Dendritic cell treated with granulocyte-macrophage colony-stimulating factor and Interleukin-4, amounts not matched to agents 40 ng/mL and 50 ng/mL, for 4 days (primary cell): ENCODE measurements at regions of chr6 and their contacts with region 1.

Region 1: GRCh38 chr6:31769684-31770371 is 7.3 kb downstream of the VWA7 start:
- H3K4me3 Mint-ChIP-seq: no peak overlapping the region
- H3K27ac Mint-ChIP-seq: peak overlapping the region; percentile 33
- H3K4me1 Mint-ChIP-seq: peaks cover 44% of the 10 kb centered on the region
- H3K27me3 Mint-ChIP-seq: peaks cover 3% of the 10 kb centered on the region

Region 2: DNA sequence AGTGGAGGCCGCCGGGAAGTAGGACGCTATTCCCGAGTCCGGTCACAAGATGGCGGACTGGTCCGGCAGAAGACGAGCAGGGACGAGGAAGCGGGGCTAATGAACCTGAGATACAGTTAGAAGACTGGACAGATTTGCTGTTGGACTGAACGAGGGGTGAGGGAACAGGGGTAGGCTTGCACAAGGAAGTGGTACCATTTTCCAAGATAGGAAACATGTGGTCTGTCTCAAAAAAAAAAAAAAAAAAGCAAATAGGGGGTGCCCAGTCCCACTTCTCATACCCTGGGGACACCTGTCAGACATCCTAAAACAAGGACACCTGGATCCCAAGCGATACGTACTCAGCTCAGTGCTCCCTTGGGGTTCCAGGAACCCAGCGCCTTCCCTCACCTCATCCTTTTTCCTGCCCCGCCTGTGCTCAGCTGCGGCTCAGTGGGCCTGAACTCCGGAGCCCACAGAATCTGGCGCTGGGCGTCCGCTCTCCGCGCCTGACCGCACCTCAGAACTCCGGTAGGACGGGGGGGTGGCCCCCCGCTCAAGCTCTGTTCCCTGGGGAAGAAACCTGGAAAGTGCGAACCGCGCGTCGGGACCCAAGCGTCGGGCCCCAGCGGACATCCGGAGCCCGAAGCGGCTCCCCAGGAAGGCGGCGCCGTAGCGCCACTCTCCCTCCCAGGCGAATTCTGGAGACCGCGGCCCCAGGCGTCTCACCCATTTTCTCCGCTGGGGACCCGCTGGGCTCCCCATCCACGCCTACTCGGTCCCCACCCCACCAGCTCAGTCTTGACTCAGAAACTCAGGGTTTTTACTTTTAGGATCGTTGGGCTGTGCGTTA is 88.8 kb before region 1 on chr6 and contains the start of gene LY6G5C:
- intact Hi-C with region 1: loop called (anchors 2 kb)
- H3K4me3 Mint-ChIP-seq: peak within 1 kb of the TSS; percentile 74
- H3K27ac Mint-ChIP-seq: peak within 1 kb of the TSS; percentile 55
- H3K4me1 Mint-ChIP-seq: peaks cover 55% of the 10 kb centered on the region
- H3K27me3 Mint-ChIP-seq: peaks cover 9% of the 10 kb centered on the region

Region 3: DNA sequence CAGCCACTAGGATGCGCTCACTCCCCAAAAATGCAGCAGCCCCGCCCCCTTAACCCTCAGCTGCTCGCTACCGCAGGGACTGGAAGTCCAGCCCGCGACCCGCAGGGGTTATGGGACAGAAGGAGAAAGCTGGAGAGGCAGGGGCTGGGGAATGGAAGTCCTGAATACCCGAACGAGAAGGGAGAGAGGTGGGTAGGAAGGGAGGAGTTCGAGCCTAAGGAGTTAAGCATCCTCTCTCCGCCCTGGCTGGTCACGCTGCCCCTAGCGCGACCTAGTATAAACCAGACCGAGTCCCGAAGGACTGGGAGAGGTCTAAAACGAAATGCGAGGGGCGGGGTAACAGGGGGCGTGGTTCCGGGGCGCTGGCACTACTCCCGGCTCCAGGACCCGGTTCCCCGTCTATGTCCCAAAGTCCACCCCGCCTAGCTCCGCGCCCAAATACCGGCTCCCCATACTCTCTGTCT is 40.3 kb before region 1 on chr6:
- intact Hi-C with region 1: loop called (anchors 2 kb)
- H3K4me3 Mint-ChIP-seq: peak overlapping the region; percentile 99
- H3K27ac Mint-ChIP-seq: peak overlapping the region; percentile 99
- H3K4me1 Mint-ChIP-seq: peaks cover 91% of the 10 kb centered on the region
- H3K27me3 Mint-ChIP-seq: peaks cover 3% of the 10 kb centered on the region

Region 4: GRCh38 chr6:31739639-31740396 is 30.0 kb before region 1 on chr6 and contains the start of gene MSH5:
- intact Hi-C with region 1: loop called (anchors 2 kb)
- H3K4me3 Mint-ChIP-seq: peak within 1 kb of the TSS; percentile 87
- H3K27ac Mint-ChIP-seq: peak within 1 kb of the TSS; percentile 91
- H3K4me1 Mint-ChIP-seq: peaks cover 63% of the 10 kb centered on the region
- H3K27me3 Mint-ChIP-seq: no peaks in the 10 kb centered on the region

Region 5: GRCh38 chr6:32153564-32154513 is 384.0 kb after region 1 on chr6 and contains the start of gene PPT2:
- intact Hi-C with region 1: no loop called
- H3K4me3 Mint-ChIP-seq: peak within 1 kb of the TSS; percentile 86
- H3K27ac Mint-ChIP-seq: peak within 1 kb of the TSS; percentile 61
- H3K4me1 Mint-ChIP-seq: peaks cover 39% of the 10 kb centered on the region
- H3K27me3 Mint-ChIP-seq: peaks cover 64% of the 10 kb centered on the region

Region 6: GRCh38 chr6:32597024-32597423 is 827.2 kb after region 1 on chr6:
- intact Hi-C with region 1: no loop called
- H3K4me3 Mint-ChIP-seq: no peak overlapping the region
- H3K27ac Mint-ChIP-seq: no peak overlapping the region
- H3K4me1 Mint-ChIP-seq: peaks cover 16% of the 10 kb centered on the region
- H3K27me3 Mint-ChIP-seq: no peaks in the 10 kb centered on the region